PC-9 (cell line): ENCODE measurements at regions of chr2 and their contacts with region 1.

Region 1: DNA sequence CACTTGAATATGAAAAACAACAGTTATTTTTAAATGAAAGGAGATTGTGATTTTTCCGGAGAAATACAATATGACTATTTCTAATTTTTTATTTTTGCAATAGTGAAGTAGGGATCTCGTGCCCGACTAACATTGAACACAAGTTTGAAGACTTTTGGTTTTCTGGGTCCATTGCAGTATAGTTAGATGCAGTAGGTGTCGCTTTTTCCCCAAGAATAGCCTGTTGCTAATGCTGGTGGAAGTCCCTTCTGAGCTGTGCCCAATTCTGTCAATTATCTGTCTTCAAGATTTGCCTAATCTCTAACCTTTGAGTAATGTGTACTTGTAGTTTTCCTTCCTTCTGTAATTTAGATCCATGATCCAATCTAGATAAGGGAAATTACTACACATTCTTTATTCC is 36.5 kb downstream of the SEMA4F start:
- DNase-seq: peak; percentile 24 to 64
- H3K4me3 ChIP-seq: no peak overlapping the region
- H3K27ac ChIP-seq: no peak overlapping the region
- H3K4me1 ChIP-seq: peaks cover 22% of the 10 kb centered on the region
- H3K27me3 ChIP-seq: no peaks in the 10 kb centered on the region
- CTCF ChIP-seq: peak; percentile 93

Region 2: GRCh38 chr2:74876081-74876886 is 185.7 kb after region 1 on chr2:
- CTCF ChIA-PET with region 1: interaction called, 4 read pairs
- POLR2A ChIA-PET with region 1: no interaction called
- intact Hi-C with region 1: loop called (anchors 1 kb)
- DNase-seq: peak; percentile 35 to 48
- H3K4me3 ChIP-seq: no peak overlapping the region
- H3K27ac ChIP-seq: peak overlapping the region; percentile 39; the same call in 1 of the 2 replicates
- H3K4me1 ChIP-seq: no peaks in the 10 kb centered on the region
- H3K27me3 ChIP-seq: no peaks in the 10 kb centered on the region
- CTCF ChIP-seq: peak; percentile 89

Region 3: GRCh38 chr2:75064691-75065396 is 374.3 kb after region 1 on chr2:
- CTCF ChIA-PET with region 1: no interaction called
- POLR2A ChIA-PET with region 1: no interaction called
- intact Hi-C with region 1: loop called (anchors 10 kb)
- DNase-seq: peak; percentile 55
- H3K4me3 ChIP-seq: no peak overlapping the region
- H3K27ac ChIP-seq: no peak overlapping the region
- H3K4me1 ChIP-seq: no peaks in the 10 kb centered on the region
- H3K27me3 ChIP-seq: no peaks in the 10 kb centered on the region
- CTCF ChIP-seq: peak; percentile 94

Region 4: DNA sequence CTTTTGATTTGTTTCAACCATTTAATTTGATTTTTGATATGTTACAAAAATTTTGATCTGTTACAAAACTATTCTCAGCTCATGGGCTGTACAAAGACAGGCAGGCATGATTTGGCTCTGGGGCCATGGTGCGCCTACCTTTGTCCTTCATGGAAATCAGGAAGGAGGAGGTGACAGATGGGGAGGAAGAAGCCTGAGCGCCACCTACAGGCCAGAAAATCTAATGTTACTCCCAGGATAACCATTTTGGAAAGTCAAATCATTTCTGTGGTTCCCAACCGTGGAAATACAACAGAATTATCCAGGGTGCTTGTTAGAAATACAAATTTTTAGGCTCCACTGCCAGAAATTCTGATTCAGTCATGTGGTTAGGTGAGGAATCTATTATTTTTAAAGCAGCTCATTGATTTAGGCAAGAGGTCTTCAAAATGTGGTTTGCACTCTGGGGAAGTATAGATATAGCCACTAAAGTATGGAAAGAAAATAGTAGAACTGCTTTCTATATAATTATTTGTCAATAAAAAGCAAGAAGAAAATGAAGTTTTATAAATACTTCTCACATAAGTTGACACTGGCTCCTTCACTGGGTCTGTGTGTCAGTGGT is 776.2 kb after region 1 on chr2:
- CTCF ChIA-PET with region 1: no interaction called
- POLR2A ChIA-PET with region 1: no interaction called
- intact Hi-C with region 1: loop called (anchors 1 kb)
- DNase-seq: peak in 1 of 2 experiments; percentile 33
- H3K4me3 ChIP-seq: no peak overlapping the region
- H3K27ac ChIP-seq: no peak overlapping the region
- H3K4me1 ChIP-seq: peaks cover 14% of the 10 kb centered on the region; the same call in 1 of the 2 replicates
- H3K27me3 ChIP-seq: no peaks in the 10 kb centered on the region
- CTCF ChIP-seq: peak; percentile 73